Activated B cell treated with CpG ODN at 0.5 μM for 24 hours (primary cell): ENCODE measurements at regions of chr9 and their contacts with region 1.

Region 1: DNA sequence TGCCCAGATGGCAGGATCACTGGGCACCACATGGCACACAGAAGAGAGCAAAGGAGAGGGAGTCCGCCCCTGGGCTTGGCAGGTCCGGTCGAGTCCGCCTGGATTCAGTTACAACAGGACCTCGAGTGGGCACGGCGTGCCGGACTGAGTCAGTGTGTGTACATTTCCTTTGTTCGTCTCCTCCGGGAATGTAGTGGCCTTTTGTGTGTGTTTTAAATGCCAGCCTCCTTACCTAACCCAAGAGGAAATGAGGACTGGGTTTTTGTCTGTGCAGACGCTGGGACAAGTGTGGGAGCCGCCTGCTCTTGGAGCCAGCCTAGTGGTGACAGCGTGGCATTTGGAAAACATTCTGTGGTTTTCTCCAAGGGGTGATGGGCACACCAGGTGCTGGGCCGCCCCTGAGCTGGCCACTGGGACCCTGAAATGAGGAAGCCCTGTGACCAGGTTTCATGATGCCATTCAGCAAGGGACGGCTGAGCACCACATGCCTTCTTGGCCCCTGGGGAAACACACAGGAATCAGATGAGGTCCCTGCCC is 9.6 kb downstream of the NEK6 start:
- DNase-seq: peak; percentile 43
- ATAC-seq: peak; percentile 49
- H3K4me3 Mint-ChIP-seq: peak overlapping the region; percentile 66
- H3K27ac Mint-ChIP-seq: peak overlapping the region; percentile 88
- H3K4me1 Mint-ChIP-seq: peaks cover 95% of the 10 kb centered on the region
- H3K27me3 Mint-ChIP-seq: no peaks in the 10 kb centered on the region
- CTCF ChIP-seq: no peak

Region 2: GRCh38 chr9:124011420-124012301 is 255.7 kb before region 1 on chr9 and contains the start of gene LHX2:
- CTCF ChIA-PET with region 1: no interaction called
- POLR2A ChIA-PET with region 1: no interaction called
- intact Hi-C with region 1: loop called (anchors 10 kb)
- DNase-seq: no peak
- ATAC-seq: peak; percentile 33
- H3K4me3 Mint-ChIP-seq: peak within 1 kb of the TSS; percentile 67
- H3K27ac Mint-ChIP-seq: peak within 1 kb of the TSS; percentile 62
- H3K4me1 Mint-ChIP-seq: peaks cover 52% of the 10 kb centered on the region
- H3K27me3 Mint-ChIP-seq: peaks cover 60% of the 10 kb centered on the region
- CTCF ChIP-seq: no peak
- total RNA-seq, gene LHX2: not detected in 2 replicates

Region 3: GRCh38 chr9:124210697-124211096 is 56.6 kb before region 1 on chr9:
- CTCF ChIA-PET with region 1: no interaction called
- POLR2A ChIA-PET with region 1: interaction called, 81 read pairs
- intact Hi-C with region 1: no loop called
- DNase-seq: no peak
- ATAC-seq: peak; percentile 87
- H3K4me3 Mint-ChIP-seq: peak overlapping the region; percentile 63
- H3K27ac Mint-ChIP-seq: peak overlapping the region; percentile 81
- H3K4me1 Mint-ChIP-seq: peaks cover 97% of the 10 kb centered on the region
- H3K27me3 Mint-ChIP-seq: no peaks in the 10 kb centered on the region
- CTCF ChIP-seq: no peak